Gastrocnemius medialis (tissue), 4 donors: ENCODE measurements at regions of chr9 and their contacts with region 1.

Region 1: GRCh38 chr9:99421369-99421768 is 199.3 kb downstream of the SEC61B start:
- DNase-seq: no peak
- ATAC-seq: peak in 1 of 2 donors; percentile 80
- H3K4me3 ChIP-seq: no peak overlapping the region
- H3K27ac ChIP-seq: no peak overlapping the region
- H3K4me1 ChIP-seq: peaks cover 0 to 5% of the 10 kb centered on the region in 2 donors
- H3K27me3 ChIP-seq: no peaks in the 10 kb centered on the region
- CTCF ChIP-seq: no peak
- POLR2A ChIP-seq: no peak

Region 2: GRCh38 chr9:99385814-99386279 is 35.5 kb before region 1 on chr9:
- in situ Hi-C with region 1: no loop called
- intact Hi-C with region 1: loop called (anchors 5 kb)
- DNase-seq: no peak
- ATAC-seq: peak; percentile 21 to 26
- H3K4me3 ChIP-seq: no peak overlapping the region
- H3K27ac ChIP-seq: peak overlapping the region in 2 of 4 donors; percentile 18 to 26
- H3K4me1 ChIP-seq: peaks cover 0 to 7% of the 10 kb centered on the region in 2 donors
- H3K27me3 ChIP-seq: no peaks in the 10 kb centered on the region
- CTCF ChIP-seq: no peak
- POLR2A ChIP-seq: no peak